Dorsolateral prefrontal cortex (tissue), 120 donors: ENCODE measurements at regions of chr4 and their contacts with region 1.

Region 1: DNA sequence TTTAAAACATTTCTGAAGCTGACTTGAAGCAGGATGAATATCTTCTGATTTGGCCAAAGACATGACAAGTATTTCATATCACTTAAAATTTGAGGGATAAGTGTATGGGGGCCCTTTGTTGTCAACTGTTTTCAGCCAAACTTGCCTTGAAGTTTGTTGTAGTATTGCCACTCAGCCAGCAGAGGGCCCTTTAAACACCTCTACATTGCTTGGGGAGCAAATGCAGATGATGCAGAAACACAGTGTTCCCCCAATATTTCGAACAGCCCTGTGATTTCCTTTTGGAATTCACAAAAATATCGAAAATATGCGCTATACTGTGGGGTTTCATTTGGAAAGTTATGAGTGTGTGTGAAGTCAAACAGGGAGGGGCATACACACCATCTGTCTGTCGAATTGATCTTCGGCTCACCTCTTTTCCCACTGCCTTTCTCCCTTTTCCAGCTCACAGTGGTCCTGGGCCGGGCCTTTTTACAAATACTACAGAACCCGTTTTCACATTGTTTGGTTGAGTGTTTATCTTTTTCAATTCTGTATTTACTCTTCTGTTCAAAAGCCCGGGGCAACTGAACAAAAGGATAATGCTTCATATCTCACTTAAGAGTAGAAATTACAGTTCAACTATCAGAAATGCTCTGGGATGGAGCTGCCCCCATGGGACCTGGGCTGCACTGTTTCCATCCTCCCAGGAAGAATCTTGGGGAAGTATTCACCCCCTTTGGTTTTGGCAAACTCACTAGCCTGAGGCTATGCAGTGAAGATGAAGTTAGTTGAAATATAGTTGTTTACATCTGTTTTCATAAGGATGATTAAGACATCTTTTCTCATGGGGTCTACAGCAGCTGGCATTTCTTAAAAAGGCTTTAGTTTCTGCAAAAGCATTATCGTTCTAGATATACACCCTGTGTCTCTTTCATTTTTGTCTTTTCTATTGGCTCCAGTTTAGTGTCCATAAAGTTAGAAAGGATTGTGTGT is 137.6 kb downstream of the EGF start:
- DNase-seq: peak in 5 of 10 donors; percentile 45 to 68 (median 50)
- H3K4me3 ChIP-seq: peak overlapping the region in 1 of 59 donors; percentile 18
- H3K27ac ChIP-seq: peak overlapping the region in 17 of 59 donors; percentile 7 to 75 (median 43)
- H3K27me3 ChIP-seq: no peaks in the 10 kb centered on the region
- CTCF ChIP-seq: peak; percentile 54 to 91 (median 83)

Region 2: DNA sequence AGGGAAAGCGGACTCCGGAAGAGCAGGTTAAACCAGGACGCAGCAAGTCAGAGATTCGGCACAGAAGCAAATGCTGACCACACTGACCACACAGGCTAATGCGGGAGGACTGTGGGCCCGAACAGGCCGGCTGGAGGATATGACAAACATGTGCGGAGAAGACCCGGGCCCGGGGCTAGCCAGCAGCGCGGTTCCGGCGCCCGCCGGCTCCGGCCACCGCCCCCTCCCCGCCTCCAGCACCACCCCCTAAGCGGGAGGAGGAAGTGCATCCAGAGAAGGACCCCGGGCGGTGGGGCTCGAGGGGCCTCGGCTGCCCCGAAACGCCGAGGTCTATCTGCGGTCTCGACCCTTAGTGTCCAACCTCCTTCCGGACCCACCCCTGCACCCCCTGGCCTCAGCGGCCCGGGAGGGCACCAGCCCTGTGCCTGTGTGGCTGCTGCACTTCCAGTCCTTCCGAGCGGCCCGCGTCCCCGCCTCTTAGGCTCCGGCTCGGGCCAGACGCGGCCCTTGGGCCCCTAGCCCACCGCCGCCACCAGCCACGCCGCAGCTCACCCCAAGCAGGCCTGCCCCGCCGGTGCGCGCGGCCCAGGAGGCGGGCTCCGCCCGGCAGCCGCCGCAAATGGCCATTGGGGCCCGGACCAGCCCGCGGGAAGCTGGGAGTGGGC is 146.1 kb after region 1 on chr4:
- intact Hi-C with region 1: loop called (anchors 2 to 5 kb)
- DNase-seq: peak in 9 of 10 donors; percentile 18 to 71 (median 45)
- H3K4me3 ChIP-seq: peak overlapping the region; percentile 62 to 97 (median 89)
- H3K27ac ChIP-seq: peak overlapping the region; percentile 68 to 97 (median 91)
- H3K27me3 ChIP-seq: no peaks in the 10 kb centered on the region
- CTCF ChIP-seq: peak in 6 of 56 donors; percentile 1 to 15 (median 8)

Region 3: GRCh38 chr4:110310795-110311194 is 260.6 kb after region 1 on chr4:
- intact Hi-C with region 1: no loop called
- DNase-seq: no peak
- H3K4me3 ChIP-seq: no peak overlapping the region
- H3K27ac ChIP-seq: no peak overlapping the region
- H3K27me3 ChIP-seq: peaks cover 0 to 3% (median 0%) of the 10 kb centered on the region in 45 donors
- CTCF ChIP-seq: no peak